Common myeloid progenitor, CD34-positive (primary cell): ENCODE measurements at regions of chr10 and their contacts with region 1.

Region 1: GRCh38 chr10:29998142-29998808 is 61.1 kb downstream of the JCAD start:
- DNase-seq: peak; percentile 84 to 93 (median 89)
- H3K4me3 ChIP-seq: no peak overlapping the region
- H3K27ac ChIP-seq: no peak overlapping the region
- H3K4me1 ChIP-seq: peaks cover 4 to 33% (median 25%) of the 10 kb centered on the region in 4 experiments
- H3K27me3 ChIP-seq: peaks cover 0 to 4% (median 2%) of the 10 kb centered on the region in 5 experiments

Region 2: DNA sequence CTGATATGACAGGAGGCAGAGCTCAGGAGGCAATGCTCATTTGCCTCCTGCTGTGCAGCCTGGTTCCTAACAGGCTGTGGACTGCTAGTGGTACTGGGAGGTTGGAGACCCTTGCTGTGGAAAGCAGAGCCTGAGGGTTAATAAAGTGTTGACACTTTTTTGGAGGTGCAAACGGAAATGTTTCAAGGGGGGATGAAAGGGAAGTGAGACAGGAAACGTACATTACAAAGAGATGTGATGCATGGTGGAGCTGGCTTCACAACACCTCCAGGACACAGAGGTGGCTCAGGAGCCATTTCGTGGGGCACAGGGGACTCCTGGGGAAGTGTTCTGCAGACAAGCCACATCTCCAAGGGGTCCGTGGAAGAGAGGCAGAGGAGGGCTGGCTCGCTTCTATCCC is 225.9 kb before region 1 on chr10:
- CTCF ChIA-PET with region 1: no interaction called
- POLR2A ChIA-PET with region 1: no interaction called
- DNase-seq: no peak
- H3K4me3 ChIP-seq: no peak overlapping the region
- H3K27ac ChIP-seq: no peak overlapping the region
- H3K4me1 ChIP-seq: peaks cover 0 to 6% (median 4%) of the 10 kb centered on the region in 4 experiments
- H3K27me3 ChIP-seq: no peaks in the 10 kb centered on the region

Region 3: GRCh38 chr10:30013757-30014156 is 15.5 kb after region 1 on chr10:
- CTCF ChIA-PET with region 1: interaction called, 124 read pairs
- POLR2A ChIA-PET with region 1: no interaction called
- DNase-seq: no peak
- H3K4me3 ChIP-seq: no peak overlapping the region
- H3K27ac ChIP-seq: no peak overlapping the region
- H3K4me1 ChIP-seq: peaks cover 15 to 25% (median 16%) of the 10 kb centered on the region in 4 experiments
- H3K27me3 ChIP-seq: peaks cover 0 to 3% (median 0%) of the 10 kb centered on the region in 5 experiments

Region 4: DNA sequence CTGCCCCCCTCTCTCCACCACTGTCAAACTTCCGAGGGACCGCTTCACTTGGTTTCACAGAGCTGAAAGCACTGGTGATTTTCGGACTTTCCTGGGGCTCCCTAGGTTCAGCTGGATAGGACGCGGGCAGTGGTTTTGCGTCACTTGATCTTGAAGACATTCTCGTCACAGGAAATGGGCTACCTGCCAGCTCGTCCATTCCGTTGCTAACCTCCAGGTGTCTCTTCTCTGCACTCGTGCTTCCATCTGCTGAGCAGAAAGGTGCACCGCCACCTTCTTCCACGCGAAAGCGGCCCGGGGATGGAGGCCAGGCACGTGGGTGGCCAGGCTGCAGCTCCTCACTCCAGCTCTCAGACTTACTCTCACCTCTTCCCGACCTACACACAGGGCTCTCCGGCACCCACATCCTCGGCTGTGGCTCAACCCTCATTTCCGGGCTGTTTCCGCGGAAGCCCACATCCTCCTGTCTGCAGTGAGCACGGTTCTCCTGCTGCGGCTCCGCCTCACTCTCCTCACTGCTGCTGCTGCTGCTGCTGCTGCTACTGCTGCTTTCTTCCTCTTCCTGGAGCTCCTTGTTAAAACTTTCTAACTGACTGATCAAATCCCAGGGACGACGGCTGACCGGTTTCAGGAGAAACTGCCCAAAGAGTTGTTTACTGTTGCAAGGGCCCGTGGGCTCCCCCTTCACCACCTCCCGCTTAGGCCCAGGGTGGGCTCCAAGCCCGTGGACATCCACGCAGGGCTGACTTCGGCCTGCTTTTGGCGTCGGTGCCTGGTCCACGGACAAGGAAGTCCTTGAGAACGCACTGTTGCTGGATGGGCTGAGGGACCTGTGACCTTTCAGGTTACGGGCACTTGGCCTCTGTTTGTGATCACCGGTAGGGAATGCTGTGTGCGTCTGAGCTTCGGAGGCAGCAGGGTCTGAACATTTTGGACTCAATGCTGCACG is 29.1 kb after region 1 on chr10:
- CTCF ChIA-PET with region 1: interaction called, 124 read pairs
- POLR2A ChIA-PET with region 1: no interaction called
- DNase-seq: peak; percentile 95 to 99 (median 98)
- H3K4me3 ChIP-seq: peak overlapping the region in 4 of 7 experiments; percentile 5 to 50 (median 33)
- H3K27ac ChIP-seq: no peak overlapping the region
- H3K4me1 ChIP-seq: peaks cover 0 to 33% (median 26%) of the 10 kb centered on the region in 4 experiments
- H3K27me3 ChIP-seq: peaks cover 0 to 20% (median 0%) of the 10 kb centered on the region in 5 experiments

Region 5: GRCh38 chr10:30241422-30242110 is 243.3 kb after region 1 on chr10:
- CTCF ChIA-PET with region 1: interaction called, 98 read pairs
- POLR2A ChIA-PET with region 1: no interaction called
- DNase-seq: no peak
- H3K4me3 ChIP-seq: no peak overlapping the region
- H3K27ac ChIP-seq: no peak overlapping the region
- H3K4me1 ChIP-seq: peaks cover 0 to 3% (median under 1%) of the 10 kb centered on the region in 4 experiments
- H3K27me3 ChIP-seq: no peaks in the 10 kb centered on the region